ENCODE measurements at regions of chr11 and their contacts with region 1.

Region 1: GRCh38 chr11:57741132-57742086 is at the start of gene SELENOH:
- DNase-seq: peak; percentile 87 to 98 (median 97)
- H3K4me3 ChIP-seq: peak within 1 kb of the TSS; percentile 60 to 98 (median 87)
- H3K27ac ChIP-seq: peak within 1 kb of the TSS; percentile 44 to 96 (median 90)
- H3K27me3 ChIP-seq: no peaks in the 10 kb centered on the region
- CTCF ChIP-seq: peak in 21 of 56 donors; percentile 6 to 52 (median 24)
- total RNA-seq, gene SELENOH: 48.0 to 151 (median 93.6) TPM

Region 2: GRCh38 chr11:57213342-57214095 is 527.9 kb before region 1 on chr11:
- intact Hi-C with region 1: no loop called
- DNase-seq: no peak
- H3K4me3 ChIP-seq: no peak overlapping the region
- H3K27ac ChIP-seq: no peak overlapping the region
- H3K27me3 ChIP-seq: peaks cover 0 to 14% (median 0%) of the 10 kb centered on the region in 45 donors
- CTCF ChIP-seq: no peak

Region 3: DNA sequence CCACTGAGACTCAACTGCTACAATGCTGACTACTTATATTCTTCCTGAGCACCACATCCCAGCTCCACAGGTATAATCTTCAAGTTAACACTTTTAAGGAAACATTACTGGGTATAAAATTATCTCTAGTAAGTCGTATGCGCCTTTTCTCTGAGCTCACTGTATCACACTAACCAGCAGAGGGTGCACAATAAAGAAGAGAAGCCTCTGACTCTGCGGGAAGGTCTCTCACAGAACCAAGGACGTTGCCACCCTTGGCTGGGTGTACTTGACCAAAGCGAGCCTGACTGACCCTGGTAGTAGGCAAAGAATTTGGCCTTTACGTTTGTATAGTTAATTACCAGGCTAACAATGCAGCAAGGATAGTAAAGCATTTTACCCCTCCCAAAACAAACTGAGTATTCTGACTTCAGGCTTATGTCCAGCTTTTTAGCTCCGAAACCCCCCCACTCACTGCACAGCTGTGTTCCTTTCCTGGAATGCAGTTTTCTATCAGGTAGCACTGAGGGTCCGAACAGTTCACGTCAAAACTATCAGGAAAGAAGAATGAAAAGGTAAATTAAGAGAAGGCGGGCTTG is 10.4 kb after region 1 on chr11 and contains the start of gene BTBD18:
- intact Hi-C with region 1: no loop called
- DNase-seq: no peak
- H3K4me3 ChIP-seq: no peak within 1 kb of the TSS
- H3K27ac ChIP-seq: peak within 1 kb of the TSS in 4 of 59 donors; percentile 36 to 46 (median 42)
- H3K27me3 ChIP-seq: no peaks in the 10 kb centered on the region
- CTCF ChIP-seq: peak in 52 of 56 donors; percentile 26 to 65 (median 46)
- total RNA-seq, gene BTBD18: not detected

Region 4: DNA sequence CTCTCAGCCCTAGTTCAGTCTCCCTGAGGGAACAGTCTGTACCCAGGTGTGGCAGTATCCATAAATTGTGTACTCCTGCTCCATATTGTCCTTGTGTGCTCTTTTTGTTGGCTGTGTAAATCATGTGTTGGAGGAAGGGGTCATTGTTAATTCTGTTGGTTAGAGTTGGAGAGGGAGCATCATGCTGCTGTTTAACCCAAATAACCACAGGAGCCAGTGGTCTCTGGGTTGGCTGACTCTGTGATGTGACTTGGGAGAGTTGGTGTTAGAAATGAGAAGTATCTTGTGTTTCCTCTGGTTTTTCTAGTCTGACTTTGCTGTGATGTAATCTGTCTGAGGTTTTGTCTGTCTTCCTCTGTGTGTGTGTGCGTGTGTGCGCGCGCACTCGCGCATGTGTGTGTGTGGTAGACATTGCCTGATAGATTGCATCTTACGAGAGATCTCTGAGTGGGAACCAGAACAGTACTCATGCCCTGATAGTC is 50.7 kb after region 1 on chr11:
- intact Hi-C with region 1: loop called in 1 of 2 experiments (anchors 10 kb)
- DNase-seq: peak in 3 of 10 donors; percentile 51 to 64 (median 57)
- H3K4me3 ChIP-seq: peak overlapping the region in 1 of 59 donors; percentile 4
- H3K27ac ChIP-seq: peak overlapping the region in 43 of 59 donors; percentile 4 to 76 (median 49)
- H3K27me3 ChIP-seq: no peaks in the 10 kb centered on the region
- CTCF ChIP-seq: no peak

Region 5: DNA sequence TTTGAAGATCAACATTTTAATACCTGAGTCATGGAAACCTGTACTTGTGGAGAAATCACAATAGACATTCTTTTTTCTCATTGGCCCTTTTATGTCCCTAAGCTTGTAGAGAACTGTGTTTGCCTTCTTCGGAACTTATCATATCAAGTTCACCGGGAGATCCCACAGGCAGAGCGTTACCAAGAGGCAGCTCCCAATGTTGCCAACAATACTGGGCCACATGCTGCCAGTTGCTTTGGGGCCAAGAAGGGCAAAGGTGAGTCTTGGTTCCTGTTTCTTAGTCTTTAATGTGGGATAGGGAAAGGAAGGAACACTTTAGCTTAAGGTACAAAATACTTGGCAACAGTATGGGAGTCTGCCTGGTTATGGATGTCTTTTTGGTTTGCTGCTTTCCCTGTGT is 64.4 kb after region 1 on chr11:
- intact Hi-C with region 1: no loop called
- DNase-seq: no peak
- H3K4me3 ChIP-seq: no peak overlapping the region
- H3K27ac ChIP-seq: peak overlapping the region in 2 of 59 donors; percentile 4 to 6
- H3K27me3 ChIP-seq: no peaks in the 10 kb centered on the region
- CTCF ChIP-seq: no peak

Region 6: GRCh38 chr11:58334708-58335107 is 593.3 kb after region 1 on chr11:
- intact Hi-C with region 1: no loop called
- DNase-seq: no peak
- H3K4me3 ChIP-seq: no peak overlapping the region
- H3K27ac ChIP-seq: no peak overlapping the region
- H3K27me3 ChIP-seq: peaks cover 0 to 11% (median 0%) of the 10 kb centered on the region in 45 donors
- CTCF ChIP-seq: no peak